ENCODE measurements at regions of chr1 and their contacts with region 1.

Region 1: DNA sequence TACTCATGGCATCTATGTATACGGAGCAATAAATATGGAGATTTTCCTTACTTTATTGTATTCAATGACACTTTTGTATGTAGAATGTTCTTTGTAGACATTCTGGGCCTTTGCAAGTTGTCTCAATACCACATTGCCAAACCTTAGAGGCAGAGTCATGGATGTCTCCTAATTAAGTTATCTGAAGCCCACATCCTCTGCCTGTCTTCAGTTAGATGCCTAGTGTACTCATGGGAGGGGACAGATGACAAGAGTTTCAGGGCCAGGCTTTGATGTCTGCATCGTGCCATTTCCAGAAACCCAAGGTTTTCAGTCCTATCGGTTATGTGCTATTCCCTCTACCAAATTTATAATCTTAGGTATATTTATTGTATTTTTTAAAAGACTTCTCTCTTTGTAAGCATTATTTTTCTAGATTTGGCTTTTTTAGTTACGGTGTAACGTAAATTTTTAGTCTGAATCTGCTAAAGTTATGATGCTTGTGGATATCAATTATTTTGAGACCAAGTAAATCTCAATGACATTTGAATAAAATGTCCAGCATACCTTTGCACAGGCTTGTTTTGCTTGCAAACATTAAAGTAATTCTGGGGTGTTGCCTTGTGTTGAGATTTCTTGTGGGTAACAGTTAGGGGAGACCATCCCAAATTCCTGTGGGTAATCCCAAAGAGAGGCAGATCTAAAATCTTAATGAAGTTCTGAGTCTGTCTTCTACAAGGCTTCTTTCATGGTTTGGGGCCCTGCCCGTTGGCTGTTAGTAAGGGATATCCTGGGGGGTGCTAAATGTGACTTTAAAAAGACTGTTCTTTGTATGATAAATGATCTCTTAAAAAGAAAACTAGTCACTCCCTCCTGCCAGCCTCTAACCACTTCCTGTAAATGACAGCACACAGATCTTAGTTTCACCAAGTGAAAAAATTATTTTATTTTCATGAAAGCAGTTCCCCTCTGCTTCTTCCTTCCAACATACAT is 8.0 kb upstream of the MACF1 start:
- DNase-seq: peak; percentile 28 to 85 (median 59)
- ATAC-seq: peak; percentile 70 to 87 (median 72)
- H3K4me3 ChIP-seq: peak overlapping the region in 1 of 2 donors; percentile 20
- H3K4me3 Mint-ChIP-seq: peak overlapping the region; percentile 64 to 74 (median 64)
- H3K27ac ChIP-seq: peak overlapping the region; percentile 82
- H3K27ac Mint-ChIP-seq: peak overlapping the region; percentile 93 to 96
- H3K4me1 ChIP-seq: peaks cover 60 to 71% of the 10 kb centered on the region in 2 experiments
- H3K4me1 Mint-ChIP-seq: peaks cover 83 to 88% (median 85%) of the 10 kb centered on the region in 3 donors
- H3K27me3 ChIP-seq: no peaks in the 10 kb centered on the region
- H3K27me3 Mint-ChIP-seq: no peaks in the 10 kb centered on the region

Region 2: DNA sequence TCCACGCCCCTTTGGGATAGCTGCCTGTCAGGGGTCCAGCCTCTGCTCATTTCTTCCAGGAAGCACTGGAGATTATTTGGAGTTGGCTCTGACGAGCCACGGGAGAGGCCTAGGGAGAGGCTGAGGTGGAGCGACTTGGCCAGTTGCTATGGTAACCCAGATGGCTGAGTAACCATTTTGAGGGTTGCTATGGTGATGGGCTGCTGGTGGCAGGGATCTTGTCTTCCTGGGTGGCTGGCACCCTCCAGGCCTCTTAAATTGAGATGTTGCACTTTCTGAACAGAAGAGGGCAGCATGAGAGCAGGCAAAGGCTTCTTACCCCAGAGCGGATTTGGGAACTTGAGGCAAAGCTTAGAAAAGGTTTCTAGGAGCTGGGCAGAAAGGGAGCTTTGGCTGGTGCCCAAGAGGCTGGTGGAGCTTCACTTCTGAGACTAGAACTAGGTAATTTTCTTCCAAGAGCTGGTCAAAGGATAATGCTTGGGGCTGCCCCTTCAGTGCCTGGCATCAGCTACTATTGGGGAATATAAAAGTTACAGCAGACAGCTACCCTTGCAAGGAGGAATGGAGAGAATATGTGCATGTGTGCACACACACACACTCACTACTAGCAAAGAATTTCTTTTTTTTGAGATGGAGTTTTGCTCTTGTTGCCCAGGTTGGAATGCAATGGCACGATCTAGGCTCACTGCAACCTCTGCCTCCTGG is 97.8 kb before region 1 on chr1:
- CTCF ChIA-PET with region 1: interaction called, 16 to 31 read pairs
- POLR2A ChIA-PET with region 1: no interaction called
- DNase-seq: peak in 33 of 35 experiments; percentile 29 to 84 (median 51)
- ATAC-seq: peak; percentile 71 to 82 (median 78)
- H3K4me3 ChIP-seq: no peak overlapping the region
- H3K4me3 Mint-ChIP-seq: no peak overlapping the region
- H3K27ac ChIP-seq: no peak overlapping the region
- H3K27ac Mint-ChIP-seq: peak overlapping the region; percentile 11 to 25
- H3K4me1 ChIP-seq: peaks cover 7 to 13% of the 10 kb centered on the region in 2 experiments
- H3K4me1 Mint-ChIP-seq: peaks cover 23 to 25% (median 24%) of the 10 kb centered on the region in 3 donors
- H3K27me3 ChIP-seq: no peaks in the 10 kb centered on the region
- H3K27me3 Mint-ChIP-seq: no peaks in the 10 kb centered on the region

Region 3: GRCh38 chr1:39129514-39129913 is 67.0 kb before region 1 on chr1:
- CTCF ChIA-PET with region 1: no interaction called
- POLR2A ChIA-PET with region 1: no interaction called
- DNase-seq: peak in 1 of 35 experiments; percentile 20
- ATAC-seq: peak in 2 of 4 experiments; percentile 40 to 52
- H3K4me3 ChIP-seq: no peak overlapping the region
- H3K4me3 Mint-ChIP-seq: no peak overlapping the region
- H3K27ac ChIP-seq: no peak overlapping the region
- H3K27ac Mint-ChIP-seq: no peak overlapping the region
- H3K4me1 ChIP-seq: no peaks in the 10 kb centered on the region
- H3K4me1 Mint-ChIP-seq: peaks cover 0 to 8% (median 6%) of the 10 kb centered on the region in 3 donors
- H3K27me3 ChIP-seq: no peaks in the 10 kb centered on the region
- H3K27me3 Mint-ChIP-seq: no peaks in the 10 kb centered on the region

Region 4: GRCh38 chr1:39214998-39215873 is 18.7 kb after region 1 on chr1:
- CTCF ChIA-PET with region 1: interaction called, 10 to 71 read pairs
- POLR2A ChIA-PET with region 1: interaction called, 3 read pairs
- DNase-seq: peak in 23 of 35 experiments; percentile 16 to 60 (median 32)
- ATAC-seq: peak; percentile 76 to 82 (median 76)
- H3K4me3 ChIP-seq: peak overlapping the region; percentile 67 to 75
- H3K4me3 Mint-ChIP-seq: peak overlapping the region; percentile 84 to 93 (median 90)
- H3K27ac ChIP-seq: peak overlapping the region; percentile 72
- H3K27ac Mint-ChIP-seq: peak overlapping the region; percentile 95
- H3K4me1 ChIP-seq: peaks cover 6 to 41% of the 10 kb centered on the region in 2 experiments
- H3K4me1 Mint-ChIP-seq: peaks cover 52 to 61% (median 58%) of the 10 kb centered on the region in 3 donors
- H3K27me3 ChIP-seq: no peaks in the 10 kb centered on the region
- H3K27me3 Mint-ChIP-seq: no peaks in the 10 kb centered on the region

Region 5: GRCh38 chr1:39258146-39258924 is 61.8 kb after region 1 on chr1:
- CTCF ChIA-PET with region 1: interaction called, 49 to 364 read pairs
- POLR2A ChIA-PET with region 1: interaction called, 3 to 12 read pairs
- DNase-seq: peak; percentile 8 to 84 (median 52)
- ATAC-seq: peak; percentile 66 to 70 (median 68)
- H3K4me3 ChIP-seq: no peak overlapping the region
- H3K4me3 Mint-ChIP-seq: no peak overlapping the region
- H3K27ac ChIP-seq: peak overlapping the region; percentile 33
- H3K27ac Mint-ChIP-seq: peak overlapping the region in 1 of 2 donors; percentile 80
- H3K4me1 ChIP-seq: peaks cover 9 to 10% of the 10 kb centered on the region in 2 experiments
- H3K4me1 Mint-ChIP-seq: peaks cover 25 to 42% (median 33%) of the 10 kb centered on the region in 3 donors
- H3K27me3 ChIP-seq: no peaks in the 10 kb centered on the region
- H3K27me3 Mint-ChIP-seq: no peaks in the 10 kb centered on the region

Region 6: GRCh38 chr1:39277879-39278278 is 81.3 kb after region 1 on chr1:
- CTCF ChIA-PET with region 1: interaction called in 1 of 2 experiments, 14 read pairs
- POLR2A ChIA-PET with region 1: no interaction called
- DNase-seq: no peak
- ATAC-seq: no peak
- H3K4me3 ChIP-seq: no peak overlapping the region
- H3K4me3 Mint-ChIP-seq: no peak overlapping the region
- H3K27ac ChIP-seq: no peak overlapping the region
- H3K27ac Mint-ChIP-seq: peak overlapping the region; percentile 75 to 84
- H3K4me1 ChIP-seq: peaks cover 0 to 2% of the 10 kb centered on the region in 2 experiments
- H3K4me1 Mint-ChIP-seq: peaks cover 24 to 51% (median 44%) of the 10 kb centered on the region in 3 donors
- H3K27me3 ChIP-seq: no peaks in the 10 kb centered on the region
- H3K27me3 Mint-ChIP-seq: no peaks in the 10 kb centered on the region

Region 7: GRCh38 chr1:39434797-39435395 is 238.4 kb after region 1 on chr1:
- CTCF ChIA-PET with region 1: no interaction called
- POLR2A ChIA-PET with region 1: no interaction called
- DNase-seq: no peak
- ATAC-seq: no peak
- H3K4me3 ChIP-seq: no peak overlapping the region
- H3K4me3 Mint-ChIP-seq: no peak overlapping the region
- H3K27ac ChIP-seq: no peak overlapping the region
- H3K27ac Mint-ChIP-seq: peak overlapping the region; percentile 3 to 11
- H3K4me1 ChIP-seq: no peaks in the 10 kb centered on the region
- H3K4me1 Mint-ChIP-seq: no peaks in the 10 kb centered on the region
- H3K27me3 ChIP-seq: no peaks in the 10 kb centered on the region
- H3K27me3 Mint-ChIP-seq: no peaks in the 10 kb centered on the region

Measured in T-cell (primary cell).